Tibial artery (tissue), 4 donors: ENCODE measurements at regions of chr3 and their contacts with region 1.

Region 1: DNA sequence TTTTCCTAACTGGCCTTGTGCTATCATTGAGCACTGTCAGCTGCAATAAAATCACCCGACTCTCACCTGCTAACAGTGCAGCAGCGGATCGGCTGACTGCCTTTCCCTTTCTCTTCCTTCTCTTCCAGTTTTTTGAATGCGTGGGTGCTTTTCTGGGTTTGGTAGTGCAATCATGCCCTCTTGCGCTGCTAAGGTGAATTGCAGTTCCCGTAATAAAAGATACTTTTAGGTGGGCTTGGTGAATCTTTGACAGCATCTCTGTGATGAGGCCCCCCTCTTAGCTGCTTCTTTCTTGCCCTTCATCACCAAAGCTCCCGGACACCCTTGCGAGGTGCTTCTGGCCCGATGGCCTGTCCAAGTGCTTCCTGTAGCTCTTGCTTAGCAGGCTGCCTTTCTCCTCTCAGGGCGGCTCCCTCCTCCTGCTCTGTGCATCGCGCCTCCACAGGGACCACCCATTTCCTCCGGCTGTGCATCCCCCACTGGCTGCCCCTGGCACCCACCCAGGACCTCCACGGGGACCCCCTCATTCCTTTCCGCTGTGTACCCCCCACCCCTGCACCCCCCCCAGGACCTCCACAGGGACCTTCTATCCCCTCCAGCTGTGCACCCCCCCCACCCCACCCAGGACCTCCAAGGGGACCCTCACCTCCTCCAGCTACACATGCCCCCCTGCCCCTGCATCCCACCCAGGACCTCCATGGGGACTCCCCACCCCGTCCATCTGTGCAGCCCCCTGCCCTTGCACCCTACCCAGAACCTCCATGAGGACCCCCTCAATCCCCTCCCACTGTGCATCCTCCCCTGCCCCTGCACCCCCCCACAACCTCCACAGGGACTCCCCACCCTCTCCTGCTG is 50.8 kb upstream of the RPL32 start:
- DNase-seq: peak in 1 of 2 donors; percentile 49
- H3K4me3 ChIP-seq: peak overlapping the region in 1 of 2 donors; percentile 40
- H3K27ac ChIP-seq: peak overlapping the region; percentile 39 to 47
- H3K4me1 ChIP-seq: peaks cover 5 to 38% (median 23%) of the 10 kb centered on the region in 4 donors
- H3K27me3 ChIP-seq: no peaks in the 10 kb centered on the region
- CTCF ChIP-seq: peak; percentile 90 to 94

Region 2: DNA sequence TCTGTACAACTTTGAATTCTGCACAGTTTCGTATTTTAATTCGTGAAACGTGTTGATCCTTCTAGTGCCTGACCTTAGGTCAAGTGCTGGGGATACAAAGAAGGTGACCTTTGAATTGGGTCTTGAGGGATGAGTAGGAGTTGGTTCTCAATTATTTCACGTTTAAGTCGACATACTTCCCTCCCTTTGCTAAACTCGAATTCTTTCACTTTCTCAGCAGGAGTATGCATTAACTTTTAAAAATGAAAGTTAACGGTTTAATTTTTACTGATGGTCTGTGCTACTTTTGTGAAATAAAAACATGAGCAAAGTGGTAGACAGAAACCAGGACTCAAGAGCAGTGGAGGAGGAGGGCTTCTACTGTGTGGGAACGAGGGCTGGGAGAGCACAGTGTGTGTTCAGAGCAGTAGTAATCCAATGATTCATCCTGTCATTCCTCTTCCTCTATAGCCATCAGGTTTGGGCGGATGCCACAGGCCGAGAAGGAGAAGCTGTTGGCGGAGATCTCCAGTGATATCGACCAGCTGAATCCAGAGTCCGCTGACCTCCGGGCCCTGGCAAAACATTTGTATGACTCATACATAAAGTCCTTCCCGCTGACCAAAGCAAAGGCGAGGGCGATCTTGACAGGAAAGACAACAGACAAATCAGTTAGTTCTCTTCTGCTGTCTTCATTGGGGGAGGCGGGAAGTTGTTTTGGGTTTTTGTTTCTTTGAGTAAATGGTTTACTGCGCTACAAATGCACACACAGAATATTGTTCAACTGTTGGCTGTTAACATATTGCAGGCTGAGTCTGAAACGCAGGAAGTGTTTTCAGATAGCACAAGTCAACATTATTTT is 486.6 kb before region 1 on chr3:
- intact Hi-C with region 1: no loop called
- DNase-seq: peak; percentile 85
- H3K4me3 ChIP-seq: no peak overlapping the region
- H3K27ac ChIP-seq: no peak overlapping the region
- H3K4me1 ChIP-seq: no peaks in the 10 kb centered on the region
- H3K27me3 ChIP-seq: peaks cover 0 to 4% of the 10 kb centered on the region in 2 donors
- CTCF ChIP-seq: no peak

Region 3: GRCh38 chr3:12663936-12664908 is 228.0 kb before region 1 on chr3 and contains the start of gene RAF1:
- intact Hi-C with region 1: no loop called
- DNase-seq: peak; percentile 98 to 99
- H3K4me3 ChIP-seq: peak within 1 kb of the TSS; percentile 92 to 99
- H3K27ac ChIP-seq: peak within 1 kb of the TSS; percentile 99 to 100
- H3K4me1 ChIP-seq: peaks cover 0 to 33% (median 23%) of the 10 kb centered on the region in 4 donors
- H3K27me3 ChIP-seq: no peaks in the 10 kb centered on the region
- CTCF ChIP-seq: no peak

Region 4: DNA sequence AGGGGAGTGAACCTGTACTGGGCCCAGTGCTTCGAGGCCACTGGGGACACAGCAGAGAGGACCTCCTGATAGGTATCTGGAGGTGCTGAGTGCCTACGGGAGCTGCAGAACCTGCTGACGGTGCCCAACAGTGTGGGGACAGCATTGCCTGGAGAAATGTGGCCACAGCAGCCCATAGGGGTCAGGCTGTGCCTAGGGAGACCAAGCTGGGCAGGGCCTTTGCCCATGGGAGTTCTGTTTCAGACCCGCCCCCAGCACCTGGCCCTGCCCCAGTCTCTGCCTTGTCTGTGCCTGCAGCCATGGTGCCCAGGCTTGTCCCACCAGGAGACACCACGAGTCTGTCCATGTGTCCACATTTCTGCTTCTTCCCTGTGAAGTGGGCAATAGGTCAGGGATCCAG is 35.6 kb before region 1 on chr3:
- intact Hi-C with region 1: loop called (anchors 5 kb)
- DNase-seq: no peak
- H3K4me3 ChIP-seq: no peak overlapping the region
- H3K27ac ChIP-seq: no peak overlapping the region
- H3K4me1 ChIP-seq: no peaks in the 10 kb centered on the region
- H3K27me3 ChIP-seq: peaks cover 0 to 8% of the 10 kb centered on the region in 2 donors
- CTCF ChIP-seq: no peak

Region 5: DNA sequence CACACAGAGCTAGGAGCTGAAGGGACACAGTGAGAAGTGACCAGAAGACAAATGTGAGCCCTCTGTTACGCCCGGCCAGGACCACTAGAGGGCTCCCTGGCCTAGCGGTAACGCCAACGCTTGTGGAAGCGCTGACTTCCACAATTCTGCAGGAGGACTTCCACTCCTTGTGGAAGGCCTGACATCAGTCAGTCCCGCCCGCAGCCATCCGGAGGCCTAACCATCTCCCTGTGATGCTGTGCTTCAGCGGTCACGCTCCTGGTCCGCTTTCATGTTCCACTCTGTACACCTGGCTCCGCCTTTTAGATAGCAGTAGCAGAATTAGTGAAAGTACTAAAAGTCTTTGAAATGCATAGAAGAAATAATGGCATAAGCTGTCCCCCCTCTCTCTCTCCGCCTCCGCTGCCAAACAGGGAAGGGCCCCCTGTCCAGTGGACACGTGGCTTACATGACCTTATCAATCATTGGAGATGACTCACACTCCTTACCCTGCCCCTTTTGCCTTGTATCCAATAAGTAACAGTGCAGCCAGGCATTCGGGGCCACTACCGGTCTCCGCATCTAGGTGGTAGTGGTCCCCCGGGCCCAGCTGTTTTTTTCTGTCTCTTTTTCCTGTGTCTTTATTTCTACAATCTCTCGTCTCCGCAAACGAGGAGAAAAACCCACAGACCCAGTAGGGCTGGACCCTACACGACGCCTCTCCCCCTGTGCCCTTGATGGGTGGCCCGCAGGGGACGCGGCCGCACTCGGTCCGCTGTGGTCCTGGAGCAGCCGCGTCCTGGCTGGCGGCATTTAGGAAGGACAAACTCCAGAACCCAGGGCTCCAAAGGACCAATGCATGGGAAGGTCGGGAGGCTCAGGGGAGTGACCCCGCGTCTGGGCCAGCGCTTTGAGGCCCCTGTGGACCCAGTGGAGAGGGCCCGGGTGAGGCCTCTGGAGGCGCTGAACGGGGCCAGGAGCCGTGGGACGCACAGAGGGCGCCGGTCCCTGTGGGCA is 23.9 kb before region 1 on chr3:
- intact Hi-C with region 1: loop called (anchors 2 kb)
- DNase-seq: peak; percentile 83 to 90
- H3K4me3 ChIP-seq: peak overlapping the region in 1 of 2 donors; percentile 7
- H3K27ac ChIP-seq: no peak overlapping the region
- H3K4me1 ChIP-seq: peaks cover 0 to 13% (median 6%) of the 10 kb centered on the region in 4 donors
- H3K27me3 ChIP-seq: peaks cover 0 to 10% of the 10 kb centered on the region in 2 donors
- CTCF ChIP-seq: peak; percentile 92 to 93

Region 6: GRCh38 chr3:12984023-12984823 is 92.0 kb after region 1 on chr3:
- intact Hi-C with region 1: loop called (anchors 10 kb)
- DNase-seq: peak; percentile 71 to 84
- H3K4me3 ChIP-seq: no peak overlapping the region
- H3K27ac ChIP-seq: no peak overlapping the region
- H3K4me1 ChIP-seq: peaks cover 0 to 12% (median 0%) of the 10 kb centered on the region in 4 donors
- H3K27me3 ChIP-seq: no peaks in the 10 kb centered on the region
- CTCF ChIP-seq: peak; percentile 80 to 82